CD4-positive, alpha-beta memory T cell (primary cell): ENCODE measurements at regions of chr1 and their contacts with region 1.

Region 1: GRCh38 chr1:108643492-108644335 is 17.2 kb downstream of the HENMT1 start:
- DNase-seq: peak; percentile 57 to 73 (median 69)
- H3K4me3 ChIP-seq: no peak overlapping the region
- H3K4me3 Mint-ChIP-seq: peak overlapping the region in 7 of 8 donors; percentile 4 to 52 (median 17)
- H3K27ac ChIP-seq: peak overlapping the region; percentile 57
- H3K27ac Mint-ChIP-seq: peak overlapping the region; percentile 91 to 99 (median 98)
- H3K4me1 ChIP-seq: peaks cover 64% of the 10 kb centered on the region
- H3K4me1 Mint-ChIP-seq: peaks cover 59 to 76% (median 68%) of the 10 kb centered on the region in 4 donors
- H3K27me3 ChIP-seq: no peaks in the 10 kb centered on the region
- H3K27me3 Mint-ChIP-seq: no peaks in the 10 kb centered on the region

Region 2: GRCh38 chr1:107782217-107782845 is 861.4 kb before region 1 on chr1:
- CTCF ChIA-PET with region 1: no interaction called
- POLR2A ChIA-PET with region 1: no interaction called
- intact Hi-C with region 1: loop called (anchors 10 kb)
- DNase-seq: peak; percentile 44 to 71 (median 61)
- H3K4me3 ChIP-seq: no peak overlapping the region
- H3K4me3 Mint-ChIP-seq: no peak overlapping the region
- H3K27ac ChIP-seq: no peak overlapping the region
- H3K27ac Mint-ChIP-seq: no peak overlapping the region
- H3K4me1 ChIP-seq: peaks cover 29% of the 10 kb centered on the region
- H3K4me1 Mint-ChIP-seq: peaks cover 16 to 33% (median 25%) of the 10 kb centered on the region in 4 donors
- H3K27me3 ChIP-seq: no peaks in the 10 kb centered on the region
- H3K27me3 Mint-ChIP-seq: no peaks in the 10 kb centered on the region

Region 3: GRCh38 chr1:108512239-108512981 is 131.3 kb before region 1 on chr1:
- CTCF ChIA-PET with region 1: interaction called, 116 read pairs
- POLR2A ChIA-PET with region 1: interaction called, 22 read pairs
- intact Hi-C with region 1: loop called (anchors 1 kb)
- DNase-seq: peak; percentile 35 to 58 (median 53)
- H3K4me3 ChIP-seq: no peak overlapping the region
- H3K4me3 Mint-ChIP-seq: no peak overlapping the region
- H3K27ac ChIP-seq: no peak overlapping the region
- H3K27ac Mint-ChIP-seq: no peak overlapping the region
- H3K4me1 ChIP-seq: no peaks in the 10 kb centered on the region
- H3K4me1 Mint-ChIP-seq: no peaks in the 10 kb centered on the region
- H3K27me3 ChIP-seq: no peaks in the 10 kb centered on the region
- H3K27me3 Mint-ChIP-seq: peaks cover 3 to 5% of the 10 kb centered on the region in 2 donors

Region 4: GRCh38 chr1:108590957-108591356 is 52.8 kb before region 1 on chr1:
- CTCF ChIA-PET with region 1: interaction called, 6 read pairs
- POLR2A ChIA-PET with region 1: interaction called, 12 read pairs
- intact Hi-C with region 1: loop called (anchors 1 kb)
- DNase-seq: peak; percentile 67 to 86 (median 81)
- H3K4me3 ChIP-seq: no peak overlapping the region
- H3K4me3 Mint-ChIP-seq: peak overlapping the region in 4 of 8 donors; percentile 2 to 58 (median 28)
- H3K27ac ChIP-seq: peak overlapping the region; percentile 51
- H3K27ac Mint-ChIP-seq: peak overlapping the region; percentile 86 to 96 (median 89)
- H3K4me1 ChIP-seq: peaks cover 45% of the 10 kb centered on the region
- H3K4me1 Mint-ChIP-seq: peaks cover 31 to 56% (median 43%) of the 10 kb centered on the region in 4 donors
- H3K27me3 ChIP-seq: no peaks in the 10 kb centered on the region
- H3K27me3 Mint-ChIP-seq: no peaks in the 10 kb centered on the region

Region 5: DNA sequence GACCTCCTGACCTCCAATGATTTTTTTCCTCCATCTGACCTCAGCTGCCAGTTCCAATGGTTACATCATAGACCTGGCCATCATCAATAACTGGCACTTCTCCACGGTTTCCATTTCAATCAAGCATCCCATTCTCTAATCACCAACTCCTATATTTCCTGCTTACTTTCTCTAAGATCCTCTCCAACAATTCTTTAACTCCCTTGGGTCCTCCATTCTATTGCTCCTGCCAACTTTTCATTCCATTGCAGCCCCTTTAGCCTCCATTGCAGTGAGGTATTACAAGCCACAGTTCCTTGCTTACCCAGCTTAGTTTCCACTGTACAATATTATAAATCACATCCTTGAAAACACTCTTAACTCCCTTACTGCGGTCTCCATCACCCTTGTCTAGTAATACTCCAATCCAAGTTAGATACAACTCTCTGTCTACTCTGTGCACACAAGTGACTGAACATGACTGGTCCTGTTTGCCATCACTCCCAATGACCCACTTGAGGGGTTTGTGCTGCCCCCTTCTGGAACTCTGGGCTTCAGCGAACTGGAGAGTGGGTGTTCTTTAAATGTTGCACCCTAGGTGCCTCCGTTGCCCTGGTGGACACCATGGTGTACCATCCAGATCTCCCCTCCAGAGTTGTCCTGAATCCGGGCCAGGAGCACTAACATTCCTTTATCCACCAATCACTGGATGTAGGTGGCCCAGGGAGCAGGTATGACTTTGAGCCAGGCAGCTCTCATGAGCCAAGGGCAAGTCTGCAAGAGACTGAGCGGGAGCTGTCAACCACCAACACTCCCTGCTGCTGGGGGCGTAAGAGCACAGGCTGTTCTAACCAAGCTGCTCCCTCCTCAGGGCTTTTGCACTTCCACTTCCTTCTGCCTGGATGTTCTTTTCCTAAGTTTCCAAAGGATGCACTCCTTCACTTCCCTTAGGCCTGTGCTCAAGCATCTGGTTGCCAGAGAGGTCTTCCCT is 65.3 kb after region 1 on chr1:
- CTCF ChIA-PET with region 1: interaction called, 38 read pairs
- POLR2A ChIA-PET with region 1: interaction called, 111 read pairs
- intact Hi-C with region 1: no loop called
- DNase-seq: peak; percentile 65 to 70 (median 67)
- H3K4me3 ChIP-seq: no peak overlapping the region
- H3K4me3 Mint-ChIP-seq: peak overlapping the region in 1 of 8 donors; percentile 7
- H3K27ac ChIP-seq: no peak overlapping the region
- H3K27ac Mint-ChIP-seq: peak overlapping the region in 6 of 7 donors; percentile 32 to 63 (median 61)
- H3K4me1 ChIP-seq: peaks cover 35% of the 10 kb centered on the region
- H3K4me1 Mint-ChIP-seq: peaks cover 19 to 45% (median 35%) of the 10 kb centered on the region in 4 donors
- H3K27me3 ChIP-seq: no peaks in the 10 kb centered on the region
- H3K27me3 Mint-ChIP-seq: no peaks in the 10 kb centered on the region

Region 6: DNA sequence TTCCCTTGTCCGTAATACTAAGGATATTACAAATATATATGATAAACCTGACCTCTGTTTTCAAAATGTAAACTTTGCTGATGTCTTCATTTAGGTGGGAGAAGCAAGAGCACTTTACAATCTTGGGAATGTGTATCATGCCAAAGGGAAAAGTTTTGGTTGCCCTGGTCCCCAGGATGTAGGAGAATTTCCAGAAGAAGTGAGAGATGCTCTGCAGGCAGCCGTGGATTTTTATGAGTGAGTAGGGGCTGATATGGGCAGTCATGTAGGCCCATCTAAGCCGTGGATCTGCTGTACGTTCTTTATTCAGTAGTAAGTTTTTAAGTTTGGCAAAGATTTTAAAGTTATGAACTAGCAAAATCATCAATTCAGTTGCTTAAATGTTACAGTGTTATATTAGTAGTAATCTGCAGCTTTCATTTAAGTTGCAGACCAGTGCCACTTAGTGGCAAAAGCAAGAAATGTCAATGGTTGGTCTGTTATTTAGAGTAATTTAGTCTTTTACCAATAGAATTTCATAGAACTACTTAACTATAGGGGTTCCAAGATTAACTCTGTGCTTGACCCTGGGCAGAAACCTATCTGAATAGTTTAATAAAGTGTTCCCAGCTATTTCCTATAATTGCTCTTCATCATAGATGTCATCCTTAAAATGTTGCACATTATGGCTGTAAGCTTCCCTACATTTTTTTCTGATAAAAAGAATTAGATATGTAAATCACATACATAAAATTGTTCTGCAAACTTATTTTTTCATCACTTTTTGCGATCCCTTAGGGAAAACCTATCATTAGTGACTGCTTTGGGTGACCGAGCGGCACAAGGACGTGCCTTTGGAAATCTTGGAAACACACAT is 254.4 kb after region 1 on chr1:
- CTCF ChIA-PET with region 1: interaction called, 3 read pairs
- POLR2A ChIA-PET with region 1: no interaction called
- intact Hi-C with region 1: loop called (anchors 2 kb)
- DNase-seq: peak; percentile 43 to 63 (median 55)
- H3K4me3 ChIP-seq: no peak overlapping the region
- H3K4me3 Mint-ChIP-seq: no peak overlapping the region
- H3K27ac ChIP-seq: no peak overlapping the region
- H3K27ac Mint-ChIP-seq: peak overlapping the region in 1 of 7 donors; percentile 38
- H3K4me1 ChIP-seq: no peaks in the 10 kb centered on the region
- H3K4me1 Mint-ChIP-seq: peaks cover 0 to 1% (median 0%) of the 10 kb centered on the region in 4 donors
- H3K27me3 ChIP-seq: no peaks in the 10 kb centered on the region
- H3K27me3 Mint-ChIP-seq: no peaks in the 10 kb centered on the region